Thyroid gland (tissue), 4 donors: ENCODE measurements at regions of chr4 and their contacts with region 1.

Region 1: GRCh38 chr4:73019462-73020047 is 50.0 kb downstream of the COX18 start:
- DNase-seq: peak; percentile 8 to 13
- H3K4me3 ChIP-seq: no peak overlapping the region
- H3K27ac ChIP-seq: no peak overlapping the region
- H3K4me1 ChIP-seq: no peaks in the 10 kb centered on the region
- H3K27me3 ChIP-seq: no peaks in the 10 kb centered on the region
- CTCF ChIP-seq: peak; percentile 40 to 81 (median 68)
- POLR2A ChIP-seq: no peak

Region 2: DNA sequence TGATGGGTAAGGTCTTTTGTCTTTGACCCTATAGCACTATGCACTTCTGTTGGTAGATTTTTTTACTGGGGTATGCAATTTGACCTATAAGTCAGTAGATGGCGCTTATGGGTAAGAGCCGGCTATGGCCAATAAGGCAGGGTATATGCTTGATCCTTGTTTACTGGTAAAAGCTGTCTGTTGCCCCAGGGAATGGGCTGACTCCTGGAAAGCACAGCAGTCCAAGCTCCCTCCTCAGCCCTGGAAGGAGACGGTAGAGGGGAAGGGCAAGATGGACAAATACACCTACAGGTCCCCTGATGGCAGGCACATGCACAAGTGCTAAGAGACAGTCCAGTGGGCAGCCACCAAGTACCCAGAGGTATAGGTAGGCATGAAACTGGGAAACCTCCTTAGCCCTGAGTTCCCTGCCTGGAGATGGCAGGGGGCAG is 514.2 kb before region 1 on chr4:
- intact Hi-C with region 1: loop called (anchors 10 kb)
- DNase-seq: peak; percentile 13 to 23
- H3K4me3 ChIP-seq: no peak overlapping the region
- H3K27ac ChIP-seq: no peak overlapping the region
- H3K4me1 ChIP-seq: no peaks in the 10 kb centered on the region
- H3K27me3 ChIP-seq: no peaks in the 10 kb centered on the region
- CTCF ChIP-seq: peak; percentile 26 to 77 (median 69)
- POLR2A ChIP-seq: no peak

Region 3: DNA sequence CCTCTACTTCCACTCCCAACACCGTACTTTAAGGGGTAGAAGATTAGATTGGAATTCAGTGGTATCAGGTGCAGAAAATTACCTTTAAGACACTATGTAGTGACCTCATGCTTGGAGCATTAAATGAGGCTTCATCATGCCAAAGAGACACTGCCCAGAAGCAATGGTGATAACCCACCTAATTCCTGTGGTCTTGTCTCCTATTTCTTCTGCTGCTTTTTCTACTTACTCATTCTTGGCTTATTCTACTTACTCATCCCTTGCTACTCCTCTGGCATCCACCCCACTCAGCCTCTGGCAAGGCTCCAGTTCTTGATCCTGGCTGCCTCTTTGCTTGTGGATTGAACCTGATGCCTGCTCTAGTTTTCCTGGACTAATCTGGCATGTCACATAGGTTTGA is 388.3 kb before region 1 on chr4:
- intact Hi-C with region 1: no loop called
- DNase-seq: peak; percentile 39 to 59
- H3K4me3 ChIP-seq: no peak overlapping the region
- H3K27ac ChIP-seq: no peak overlapping the region
- H3K4me1 ChIP-seq: no peaks in the 10 kb centered on the region
- H3K27me3 ChIP-seq: no peaks in the 10 kb centered on the region
- CTCF ChIP-seq: no peak
- POLR2A ChIP-seq: no peak

Region 4: DNA sequence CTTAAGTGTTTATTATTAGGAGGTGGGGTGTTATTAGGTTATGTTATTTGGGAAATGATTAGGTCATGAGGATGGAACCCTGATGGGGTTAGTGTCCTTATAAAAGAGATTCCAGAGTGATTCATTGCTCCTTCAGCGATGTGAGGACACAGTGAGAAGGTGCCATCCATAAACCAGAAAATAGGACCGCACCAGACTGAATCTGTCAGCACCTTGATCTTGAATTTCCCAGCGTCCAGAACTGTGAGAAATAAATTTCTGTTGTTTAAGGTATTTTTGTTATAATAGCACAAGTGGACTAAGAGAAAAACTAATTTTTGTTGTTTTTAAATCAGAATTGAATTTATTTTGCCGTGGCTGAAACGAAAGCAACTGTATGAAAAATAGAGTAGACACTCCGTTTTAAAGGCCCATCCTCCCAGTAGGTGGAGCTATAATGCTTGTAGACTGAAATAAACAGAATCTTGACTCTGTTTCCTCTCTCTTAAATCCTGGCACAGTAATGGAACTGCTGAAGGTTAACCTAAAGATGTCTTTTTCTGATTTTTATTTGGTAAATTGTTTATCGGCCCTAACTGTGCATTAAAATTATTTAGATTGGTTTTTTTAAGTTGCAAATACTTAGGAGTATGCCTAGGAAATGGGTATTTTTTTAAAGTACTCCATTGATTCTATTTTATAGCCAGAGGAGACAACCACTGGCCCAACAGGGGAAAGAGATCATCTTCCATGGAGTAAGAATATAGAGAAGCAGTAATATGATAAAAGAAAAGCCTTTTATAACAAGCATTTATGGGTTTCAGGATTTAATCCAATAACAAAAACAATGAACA is 317.4 kb before region 1 on chr4:
- intact Hi-C with region 1: loop called (anchors 5 kb)
- DNase-seq: peak; percentile 15 to 37
- H3K4me3 ChIP-seq: peak overlapping the region in 1 of 3 donors; percentile 15
- H3K27ac ChIP-seq: no peak overlapping the region
- H3K4me1 ChIP-seq: no peaks in the 10 kb centered on the region
- H3K27me3 ChIP-seq: no peaks in the 10 kb centered on the region
- CTCF ChIP-seq: peak in 5 of 6 experiments; percentile 36 to 77 (median 58)
- POLR2A ChIP-seq: no peak

Region 5: GRCh38 chr4:73608689-73609594 is 589.4 kb after region 1 on chr4:
- intact Hi-C with region 1: no loop called
- DNase-seq: peak; percentile 48 to 55
- H3K4me3 ChIP-seq: no peak overlapping the region
- H3K27ac ChIP-seq: peak overlapping the region; percentile 6 to 92 (median 64)
- H3K4me1 ChIP-seq: peaks cover 10 to 27% of the 10 kb centered on the region in 2 donors
- H3K27me3 ChIP-seq: no peaks in the 10 kb centered on the region
- CTCF ChIP-seq: no peak
- POLR2A ChIP-seq: no peak